ENCODE measurements at regions of chr5 and their contacts with region 1.

Region 1: GRCh38 chr5:142151436-142152383 is 43.1 kb downstream of the NDFIP1 start:
- DNase-seq: peak; percentile 14 to 84 (median 46)
- ATAC-seq: peak; percentile 67
- H3K4me3 ChIP-seq: no peak overlapping the region
- H3K4me3 Mint-ChIP-seq: no peak overlapping the region
- H3K27ac ChIP-seq: no peak overlapping the region
- H3K27ac Mint-ChIP-seq: peak overlapping the region; percentile 69
- H3K4me1 ChIP-seq: no peaks in the 10 kb centered on the region
- H3K4me1 Mint-ChIP-seq: peaks cover 11% of the 10 kb centered on the region
- H3K27me3 ChIP-seq: no peaks in the 10 kb centered on the region
- H3K27me3 Mint-ChIP-seq: no peaks in the 10 kb centered on the region
- CTCF ChIP-seq: peak; percentile 94

Region 2: DNA sequence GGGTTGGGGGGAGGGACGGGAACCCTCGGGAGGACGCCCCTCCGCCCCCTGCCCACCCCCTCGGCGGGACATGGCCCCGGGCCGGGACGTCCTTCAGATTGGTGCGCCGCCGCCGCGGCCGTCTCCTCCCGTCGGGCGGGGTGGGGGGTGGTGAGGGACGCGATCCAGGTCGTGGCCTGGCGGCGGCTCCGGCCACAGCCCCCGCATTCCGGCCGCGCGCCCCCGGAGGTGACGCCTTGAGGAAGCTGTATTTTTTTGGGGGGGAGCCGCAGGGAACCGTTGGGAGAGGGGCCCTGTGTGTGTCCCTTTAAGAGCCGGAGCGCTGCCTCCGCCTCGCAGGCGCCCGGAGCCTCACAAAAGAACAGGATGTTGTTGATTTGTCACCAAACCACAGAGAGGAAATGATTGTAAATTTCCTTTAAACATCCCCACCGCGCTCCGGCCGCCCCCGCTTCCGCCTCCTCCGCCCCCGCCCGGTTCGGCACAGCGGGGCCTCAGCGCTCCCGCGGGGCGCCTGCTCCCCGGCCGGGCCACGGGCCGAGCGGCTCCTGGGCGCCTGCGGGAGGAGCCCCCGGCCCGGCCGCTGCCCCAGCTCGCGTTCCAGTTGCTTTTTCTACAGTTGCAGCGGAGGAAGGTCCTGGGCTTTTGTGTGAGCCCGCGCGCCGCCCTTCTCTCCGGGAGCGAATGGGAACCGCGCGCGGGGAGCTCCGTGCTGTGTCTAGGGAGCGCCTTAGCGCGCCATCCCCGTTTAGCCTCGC is 205.2 kb after region 1 on chr5:
- CTCF ChIA-PET with region 1: no interaction called
- POLR2A ChIA-PET with region 1: no interaction called
- intact Hi-C with region 1: loop called in 1 of 2 experiments (anchors 10 kb)
- DNase-seq: peak; percentile 72 to 94 (median 80)
- ATAC-seq: peak; percentile 85
- H3K4me3 ChIP-seq: peak overlapping the region; percentile 65
- H3K4me3 Mint-ChIP-seq: peak overlapping the region; percentile 93
- H3K27ac ChIP-seq: peak overlapping the region in 1 of 2 donors; percentile 56
- H3K27ac Mint-ChIP-seq: peak overlapping the region; percentile 73
- H3K4me1 ChIP-seq: peaks cover 42% of the 10 kb centered on the region
- H3K4me1 Mint-ChIP-seq: peaks cover 67% of the 10 kb centered on the region
- H3K27me3 ChIP-seq: no peaks in the 10 kb centered on the region
- H3K27me3 Mint-ChIP-seq: no peaks in the 10 kb centered on the region
- CTCF ChIP-seq: no peak

Region 3: DNA sequence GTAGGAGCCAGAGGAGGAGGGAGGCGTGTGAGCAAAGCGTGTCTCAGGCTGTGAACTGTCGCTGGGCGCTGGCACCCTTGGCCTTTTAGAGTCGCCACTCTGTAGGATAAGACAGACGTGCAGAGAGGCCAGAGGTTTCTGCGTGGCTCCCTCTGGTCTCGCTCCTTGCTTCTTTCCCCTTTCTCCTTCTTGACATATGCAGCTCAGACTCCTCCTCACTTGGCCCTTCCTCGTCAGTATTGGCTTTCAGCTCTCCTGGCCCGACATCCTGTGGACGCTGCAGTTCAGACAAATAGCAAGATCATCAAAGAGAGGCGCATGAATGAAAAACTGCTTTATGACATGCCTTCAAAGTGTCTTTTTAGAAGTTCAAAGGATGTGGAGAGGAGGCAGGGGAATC is 289.9 kb after region 1 on chr5:
- CTCF ChIA-PET with region 1: no interaction called
- POLR2A ChIA-PET with region 1: no interaction called
- intact Hi-C with region 1: loop called in 1 of 2 experiments (anchors 2 kb)
- DNase-seq: peak in 7 of 14 experiments; percentile 11 to 52 (median 42)
- ATAC-seq: peak; percentile 73
- H3K4me3 ChIP-seq: no peak overlapping the region
- H3K4me3 Mint-ChIP-seq: peak overlapping the region; percentile 1
- H3K27ac ChIP-seq: no peak overlapping the region
- H3K27ac Mint-ChIP-seq: no peak overlapping the region
- H3K4me1 ChIP-seq: peaks cover 29% of the 10 kb centered on the region
- H3K4me1 Mint-ChIP-seq: peaks cover 38% of the 10 kb centered on the region
- H3K27me3 ChIP-seq: no peaks in the 10 kb centered on the region
- H3K27me3 Mint-ChIP-seq: no peaks in the 10 kb centered on the region
- CTCF ChIP-seq: no peak

Region 4: GRCh38 chr5:142600611-142601358 is 449.1 kb after region 1 on chr5:
- CTCF ChIA-PET with region 1: no interaction called
- POLR2A ChIA-PET with region 1: no interaction called
- intact Hi-C with region 1: loop called in 1 of 2 experiments (anchors 10 kb)
- DNase-seq: no peak
- ATAC-seq: no peak
- H3K4me3 ChIP-seq: no peak overlapping the region
- H3K4me3 Mint-ChIP-seq: no peak overlapping the region
- H3K27ac ChIP-seq: no peak overlapping the region
- H3K27ac Mint-ChIP-seq: no peak overlapping the region
- H3K4me1 ChIP-seq: no peaks in the 10 kb centered on the region
- H3K4me1 Mint-ChIP-seq: no peaks in the 10 kb centered on the region
- H3K27me3 ChIP-seq: peaks cover 4 to 11% of the 10 kb centered on the region in 2 experiments
- H3K27me3 Mint-ChIP-seq: peaks cover 37% of the 10 kb centered on the region
- CTCF ChIP-seq: no peak

Region 5: GRCh38 chr5:142699184-142699720 is 547.5 kb after region 1 on chr5:
- CTCF ChIA-PET with region 1: interaction called, 6 read pairs
- POLR2A ChIA-PET with region 1: no interaction called
- intact Hi-C with region 1: loop called (anchors 1 kb)
- DNase-seq: peak; percentile 52 to 83 (median 72)
- ATAC-seq: peak; percentile 98
- H3K4me3 ChIP-seq: no peak overlapping the region
- H3K4me3 Mint-ChIP-seq: no peak overlapping the region
- H3K27ac ChIP-seq: no peak overlapping the region
- H3K27ac Mint-ChIP-seq: no peak overlapping the region
- H3K4me1 ChIP-seq: no peaks in the 10 kb centered on the region
- H3K4me1 Mint-ChIP-seq: no peaks in the 10 kb centered on the region
- H3K27me3 ChIP-seq: no peaks in the 10 kb centered on the region
- H3K27me3 Mint-ChIP-seq: no peaks in the 10 kb centered on the region
- CTCF ChIP-seq: peak; percentile 82

Measured in CD4-positive, alpha-beta T cell (primary cell).